GM13977 (cell line): ENCODE measurements at regions of chr3 and their contacts with region 1.

Region 1: DNA sequence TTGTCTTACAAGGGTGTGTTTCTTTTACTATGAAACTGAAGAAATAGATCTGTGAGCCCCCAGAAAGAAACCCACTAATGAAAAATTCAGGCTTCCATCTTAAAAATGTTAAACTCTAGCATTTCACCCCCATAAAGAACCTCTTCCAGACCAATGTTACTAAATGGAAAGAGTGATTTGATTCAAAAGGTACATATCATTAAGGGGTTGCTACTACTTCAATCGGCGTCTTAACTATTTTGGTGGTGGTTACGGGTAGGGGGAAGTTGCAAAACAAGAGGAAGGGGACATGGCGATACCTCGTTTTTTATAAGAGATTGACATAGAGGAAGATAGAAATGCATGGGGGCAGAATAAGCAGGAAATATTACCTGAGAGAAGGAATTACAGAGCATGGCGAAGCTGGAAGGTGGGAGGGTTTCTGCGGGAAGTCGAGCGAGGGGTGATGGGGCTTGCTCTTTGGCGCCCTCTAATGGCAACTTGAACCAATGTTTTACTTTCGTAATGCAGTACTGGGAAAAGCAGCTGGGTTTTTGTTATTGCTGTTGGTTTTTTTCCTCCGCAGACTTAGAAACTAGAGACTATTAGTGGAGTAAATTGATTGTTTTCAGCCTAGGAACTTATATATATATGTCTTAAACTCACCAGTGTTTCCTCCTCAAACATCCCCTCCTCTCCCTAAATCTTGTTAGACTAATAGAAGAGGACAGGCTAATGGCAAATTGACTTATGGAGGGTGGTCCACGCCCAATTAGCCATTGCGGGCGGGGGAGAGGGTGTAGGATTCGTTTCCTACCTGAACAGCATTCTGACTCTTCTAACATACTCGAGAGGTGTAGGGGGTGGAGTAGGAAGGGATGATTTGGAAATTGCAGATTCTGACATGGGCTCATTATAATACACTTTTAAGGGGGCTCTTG is 11.3 kb upstream of the SOX2 start:
- DNase-seq: peak; percentile 75
- CTCF ChIP-seq: peak; percentile 88

Region 2: DNA sequence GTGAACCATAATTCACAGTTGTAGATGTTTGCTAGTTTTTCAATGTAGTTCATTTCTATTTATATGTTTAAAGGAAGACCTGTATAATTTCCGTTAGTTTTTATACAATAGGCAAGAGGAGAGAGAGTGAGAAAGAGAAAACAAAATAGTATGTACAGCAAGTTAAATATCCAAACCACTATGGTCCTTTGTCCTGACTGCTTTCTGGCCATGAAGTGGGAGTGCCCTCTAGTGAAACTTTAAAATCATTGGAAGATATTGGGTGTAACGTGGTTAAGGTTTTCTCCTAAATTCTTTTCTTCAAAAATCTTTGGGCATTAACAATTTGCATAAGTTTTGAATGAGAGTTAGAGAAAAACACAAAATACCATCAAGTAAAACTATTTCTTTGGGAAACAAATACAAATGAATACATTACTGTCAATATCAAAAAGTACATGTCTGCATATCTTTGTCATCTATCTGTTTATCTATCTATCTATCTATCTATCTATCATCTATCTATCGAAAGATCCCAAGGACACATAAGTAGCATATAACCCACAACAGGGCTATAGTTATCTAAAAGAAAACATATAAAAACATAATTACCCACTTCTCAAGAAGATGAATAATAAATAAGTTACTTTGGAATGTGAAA is 558.2 kb after region 1 on chr3:
- in situ Hi-C with region 1: loop called (anchors 25 kb)
- DNase-seq: peak; percentile 39
- CTCF ChIP-seq: peak; percentile 55

Region 3: DNA sequence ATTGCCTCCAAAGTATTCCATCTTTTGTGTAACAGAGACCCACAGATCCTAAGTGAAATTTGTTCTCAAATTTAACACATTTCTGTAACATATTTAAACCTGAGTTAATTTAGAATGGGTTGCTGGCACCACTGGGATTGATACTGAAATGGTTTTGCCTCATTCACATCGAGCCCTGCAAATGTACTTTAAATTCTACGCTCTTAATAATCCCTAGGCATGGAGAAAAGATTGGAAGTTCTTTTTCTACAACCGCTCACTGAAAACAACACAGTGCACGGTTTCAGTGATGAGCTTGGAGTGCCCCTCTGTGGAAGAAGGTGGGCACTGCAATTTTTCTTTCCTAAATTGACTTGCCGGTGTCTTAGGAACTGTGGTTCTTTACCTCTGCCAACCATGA is 983.0 kb after region 1 on chr3:
- in situ Hi-C with region 1: loop called (anchors 10 kb)
- DNase-seq: peak; percentile 77
- CTCF ChIP-seq: peak; percentile 91